ENCODE measurements at regions of chr4 and their contacts with region 1.

Region 1: DNA sequence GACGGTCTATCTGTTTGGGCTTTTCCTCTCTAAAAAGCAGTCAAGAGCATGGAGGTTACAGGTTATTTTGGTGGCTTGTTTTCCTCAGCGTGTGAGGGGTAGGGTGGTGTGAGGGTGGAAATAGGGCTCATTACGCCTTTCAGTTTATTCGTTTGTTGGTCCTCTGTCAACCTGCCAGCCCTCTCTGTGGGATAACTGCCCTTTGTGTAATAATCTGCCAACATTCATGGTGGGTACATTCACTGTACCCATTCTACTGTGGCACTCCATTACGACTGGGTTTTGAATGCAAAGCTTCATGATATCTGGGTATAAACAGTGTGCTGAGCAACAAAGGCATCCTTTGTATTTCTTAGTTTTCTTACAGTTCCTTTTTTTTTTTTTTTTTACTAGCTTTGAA is 136.4 kb downstream of the ADGRL3 start:
- DNase-seq: no peak
- H3K4me3 ChIP-seq: no peak overlapping the region
- H3K4me3 Mint-ChIP-seq: no peak overlapping the region
- H3K27ac ChIP-seq: no peak overlapping the region
- H3K27ac Mint-ChIP-seq: no peak overlapping the region
- H3K4me1 ChIP-seq: no peaks in the 10 kb centered on the region
- H3K4me1 Mint-ChIP-seq: no peaks in the 10 kb centered on the region
- H3K27me3 ChIP-seq: no peaks in the 10 kb centered on the region
- H3K27me3 Mint-ChIP-seq: no peaks in the 10 kb centered on the region

Region 2: GRCh38 chr4:60709061-60709460 is 627.4 kb before region 1 on chr4:
- CTCF ChIA-PET with region 1: no interaction called
- POLR2A ChIA-PET with region 1: no interaction called
- intact Hi-C with region 1: no loop called
- DNase-seq: no peak
- H3K4me3 ChIP-seq: no peak overlapping the region
- H3K4me3 Mint-ChIP-seq: no peak overlapping the region
- H3K27ac ChIP-seq: no peak overlapping the region
- H3K27ac Mint-ChIP-seq: no peak overlapping the region
- H3K4me1 ChIP-seq: no peaks in the 10 kb centered on the region
- H3K4me1 Mint-ChIP-seq: no peaks in the 10 kb centered on the region
- H3K27me3 ChIP-seq: no peaks in the 10 kb centered on the region
- H3K27me3 Mint-ChIP-seq: no peaks in the 10 kb centered on the region

Region 3: GRCh38 chr4:61407642-61408618 is 71.4 kb after region 1 on chr4:
- CTCF ChIA-PET with region 1: no interaction called
- POLR2A ChIA-PET with region 1: no interaction called
- intact Hi-C with region 1: no loop called
- DNase-seq: no peak
- H3K4me3 ChIP-seq: no peak overlapping the region
- H3K4me3 Mint-ChIP-seq: peak overlapping the region in 1 of 8 donors; percentile 50
- H3K27ac ChIP-seq: no peak overlapping the region
- H3K27ac Mint-ChIP-seq: no peak overlapping the region
- H3K4me1 ChIP-seq: no peaks in the 10 kb centered on the region
- H3K4me1 Mint-ChIP-seq: no peaks in the 10 kb centered on the region
- H3K27me3 ChIP-seq: no peaks in the 10 kb centered on the region
- H3K27me3 Mint-ChIP-seq: no peaks in the 10 kb centered on the region

Region 4: DNA sequence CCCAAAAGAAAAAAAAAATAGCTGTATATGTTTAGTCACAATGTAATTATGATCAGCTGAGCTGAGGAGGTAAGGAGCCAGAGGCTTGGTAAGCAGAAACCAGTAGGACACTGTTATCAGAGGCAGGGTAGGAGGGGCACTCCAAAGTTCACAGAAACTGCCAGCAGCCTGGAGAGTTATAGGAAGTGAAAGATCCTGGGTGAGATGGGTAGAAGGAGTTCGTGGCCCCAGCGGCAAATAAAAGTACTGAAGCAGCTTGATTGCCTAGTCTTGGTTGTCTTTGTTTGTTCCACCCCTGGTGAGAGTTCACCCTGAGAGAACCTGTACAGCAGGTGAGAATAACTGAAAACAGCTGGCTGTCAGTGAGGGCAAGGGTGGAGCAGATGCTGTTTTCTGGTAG is 204.5 kb after region 1 on chr4:
- CTCF ChIA-PET with region 1: no interaction called
- POLR2A ChIA-PET with region 1: no interaction called
- intact Hi-C with region 1: loop called (anchors 5 kb)
- DNase-seq: no peak
- H3K4me3 ChIP-seq: no peak overlapping the region
- H3K4me3 Mint-ChIP-seq: no peak overlapping the region
- H3K27ac ChIP-seq: no peak overlapping the region
- H3K27ac Mint-ChIP-seq: no peak overlapping the region
- H3K4me1 ChIP-seq: no peaks in the 10 kb centered on the region
- H3K4me1 Mint-ChIP-seq: no peaks in the 10 kb centered on the region
- H3K27me3 ChIP-seq: no peaks in the 10 kb centered on the region
- H3K27me3 Mint-ChIP-seq: no peaks in the 10 kb centered on the region

Region 5: DNA sequence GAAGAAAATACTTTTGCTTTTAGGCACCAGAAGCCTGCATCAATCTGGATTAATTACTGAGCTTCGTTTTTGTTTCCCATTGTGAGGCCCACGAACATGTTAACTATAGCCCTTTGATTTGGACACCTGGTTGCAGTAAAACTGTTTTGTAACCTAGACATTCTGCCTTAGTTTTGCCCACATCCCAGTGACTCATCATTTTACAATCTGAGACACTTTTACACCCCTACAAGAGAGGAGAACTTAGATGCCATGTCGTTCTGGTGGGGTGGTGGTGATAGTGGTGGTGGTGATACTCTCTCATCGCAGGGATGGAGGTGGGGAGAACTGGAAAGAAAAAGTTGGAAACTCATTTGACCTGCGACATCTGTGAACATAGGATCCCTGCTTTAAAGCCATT is 1120.9 kb after region 1 on chr4:
- CTCF ChIA-PET with region 1: no interaction called
- POLR2A ChIA-PET with region 1: no interaction called
- intact Hi-C with region 1: no loop called
- DNase-seq: no peak
- H3K4me3 ChIP-seq: no peak overlapping the region
- H3K4me3 Mint-ChIP-seq: no peak overlapping the region
- H3K27ac ChIP-seq: no peak overlapping the region
- H3K27ac Mint-ChIP-seq: no peak overlapping the region
- H3K4me1 ChIP-seq: no peaks in the 10 kb centered on the region
- H3K4me1 Mint-ChIP-seq: no peaks in the 10 kb centered on the region
- H3K27me3 ChIP-seq: no peaks in the 10 kb centered on the region
- H3K27me3 Mint-ChIP-seq: no peaks in the 10 kb centered on the region

Measured in CD4-positive, alpha-beta memory T cell (primary cell).